ENCODE measurements at regions of chr16 and their contacts with region 1.

Region 1: GRCh38 chr16:495127-495748 is 32.3 kb upstream of the CAPN15 start:
- DNase-seq: peak; percentile 41 to 80
- H3K4me3 ChIP-seq: no peak overlapping the region
- H3K27ac ChIP-seq: no peak overlapping the region
- H3K4me1 ChIP-seq: peaks cover 6 to 9% (median 7%) of the 10 kb centered on the region in 4 experiments
- H3K27me3 ChIP-seq: no peaks in the 10 kb centered on the region
- CTCF ChIP-seq: peak; percentile 70 to 78 (median 74)
- EP300 ChIP-seq: no peak
- POLR2A ChIP-seq: no peak
- RAD21 ChIP-seq: peak; percentile 62 to 67

Region 2: DNA sequence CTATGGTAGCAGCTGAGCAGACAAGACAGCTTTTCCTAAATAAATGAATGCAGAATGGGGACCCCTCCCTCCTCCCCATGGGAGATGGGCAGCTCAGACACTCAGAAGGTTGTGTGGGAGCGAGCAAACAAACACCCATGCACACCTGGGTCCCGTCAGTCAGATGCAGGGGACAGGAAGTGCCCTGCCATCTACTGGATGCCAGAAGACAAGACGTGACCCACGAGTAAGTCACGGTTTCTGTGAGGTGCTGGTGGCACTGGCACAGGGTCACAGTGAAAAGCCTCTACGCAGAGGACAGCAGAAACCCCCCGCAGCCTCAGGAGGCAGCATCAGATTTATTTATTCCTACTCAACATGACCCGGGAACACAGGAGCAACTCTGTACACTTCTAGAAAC is 306.6 kb before region 1 on chr16:
- CTCF ChIA-PET with region 1: no interaction called
- POLR2A ChIA-PET with region 1: no interaction called
- DNase-seq: no peak
- H3K4me3 ChIP-seq: no peak overlapping the region
- H3K27ac ChIP-seq: no peak overlapping the region
- H3K4me1 ChIP-seq: no peaks in the 10 kb centered on the region
- H3K27me3 ChIP-seq: no peaks in the 10 kb centered on the region
- CTCF ChIP-seq: peak; percentile 21 to 59 (median 58); a peak in 3 of 4 replicates
- EP300 ChIP-seq: no peak
- POLR2A ChIP-seq: no peak
- RAD21 ChIP-seq: no peak; a peak in 1 of 4 replicates

Region 3: GRCh38 chr16:391885-392335 is 103.3 kb before region 1 on chr16:
- CTCF ChIA-PET with region 1: interaction called, 24 read pairs
- POLR2A ChIA-PET with region 1: no interaction called
- DNase-seq: peak; percentile 83 to 97
- H3K4me3 ChIP-seq: no peak overlapping the region
- H3K27ac ChIP-seq: no peak overlapping the region
- H3K4me1 ChIP-seq: peaks cover 0 to 7% (median 2%) of the 10 kb centered on the region in 4 experiments; a peak in 3 of 7 replicates
- H3K27me3 ChIP-seq: no peaks in the 10 kb centered on the region
- CTCF ChIP-seq: peak; percentile 94 to 100 (median 99)
- EP300 ChIP-seq: no peak
- POLR2A ChIP-seq: no peak
- RAD21 ChIP-seq: peak; percentile 99

Region 4: GRCh38 chr16:521381-522210 is 26.4 kb after region 1 on chr16:
- CTCF ChIA-PET with region 1: interaction called, 12 read pairs
- POLR2A ChIA-PET with region 1: interaction called, 3 read pairs
- DNase-seq: peak in 1 of 2 experiments; percentile 92
- H3K4me3 ChIP-seq: no peak overlapping the region
- H3K27ac ChIP-seq: no peak overlapping the region
- H3K4me1 ChIP-seq: peaks cover 0 to 12% (median 7%) of the 10 kb centered on the region in 4 experiments; a peak in 5 of 7 replicates
- H3K27me3 ChIP-seq: no peaks in the 10 kb centered on the region
- CTCF ChIP-seq: peak; percentile 75 to 83 (median 76)
- EP300 ChIP-seq: no peak
- POLR2A ChIP-seq: no peak
- RAD21 ChIP-seq: peak; percentile 74 to 80

Region 5: DNA sequence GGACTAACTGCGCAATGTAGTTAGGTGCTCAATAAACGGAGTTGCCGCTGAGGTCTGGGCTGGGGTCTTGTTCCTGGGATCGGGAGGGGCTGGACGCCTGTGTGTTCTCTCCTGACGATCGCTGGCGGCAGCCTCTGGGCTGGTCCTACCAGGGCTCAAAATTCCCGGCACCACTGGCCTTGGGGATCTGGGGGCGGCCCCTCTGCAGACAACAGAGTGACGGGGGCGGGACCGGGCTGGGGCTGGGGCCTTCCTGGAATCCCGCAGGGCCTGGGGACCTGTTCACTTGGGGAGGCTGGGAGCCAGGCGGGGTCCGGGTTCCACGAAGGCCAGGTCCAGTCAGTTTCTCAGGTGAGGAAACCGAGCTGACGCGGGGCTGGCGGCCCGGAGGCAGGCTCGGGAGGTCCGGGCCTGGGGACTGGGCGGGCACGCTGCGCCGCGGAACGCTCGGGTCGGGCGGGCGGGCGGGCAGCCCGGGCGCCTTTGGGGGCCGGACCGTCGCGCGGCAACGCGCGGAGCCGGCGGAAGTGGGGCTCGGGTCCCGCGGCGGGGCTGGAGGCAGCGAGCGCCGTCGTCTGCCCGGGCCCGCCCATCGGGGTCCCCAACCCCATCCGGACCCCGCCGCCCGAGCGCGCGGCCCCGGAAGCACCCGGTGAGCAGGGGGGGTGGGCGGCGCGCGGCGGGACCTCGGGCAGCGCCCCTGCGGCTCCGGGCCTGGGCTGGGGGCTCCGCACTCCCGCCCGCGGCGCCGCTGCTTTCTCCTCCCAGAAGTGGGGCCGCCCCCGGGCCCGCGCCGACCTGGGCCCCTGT is 74.4 kb after region 1 on chr16 and contains the start of gene PIGQ:
- CTCF ChIA-PET with region 1: no interaction called
- POLR2A ChIA-PET with region 1: no interaction called
- DNase-seq: peak in 1 of 2 experiments; percentile 85
- H3K4me3 ChIP-seq: peak within 1 kb of the TSS; percentile 71 to 95 (median 72)
- H3K27ac ChIP-seq: no peak within 1 kb of the TSS; the same call in 1 of the 2 replicates
- H3K4me1 ChIP-seq: peaks cover 0 to 27% (median 12%) of the 10 kb centered on the region in 4 experiments; a peak in 5 of 7 replicates
- H3K27me3 ChIP-seq: no peaks in the 10 kb centered on the region
- CTCF ChIP-seq: no peak
- EP300 ChIP-seq: no peak
- POLR2A ChIP-seq: peak in 1 of 2 experiments; percentile 33; a peak in 1 of 3 replicates
- RAD21 ChIP-seq: no peak
- total RNA-seq, gene PIGQ: 34.2 and 36.0 TPM in 2 replicates

Region 6: GRCh38 chr16:585351-585750 is 90.1 kb after region 1 on chr16:
- CTCF ChIA-PET with region 1: no interaction called
- POLR2A ChIA-PET with region 1: no interaction called
- DNase-seq: no peak
- H3K4me3 ChIP-seq: no peak overlapping the region
- H3K27ac ChIP-seq: no peak overlapping the region
- H3K4me1 ChIP-seq: peaks cover 0 to 26% (median 19%) of the 10 kb centered on the region in 4 experiments; a peak in 6 of 7 replicates
- H3K27me3 ChIP-seq: peaks cover 0 to 26% (median 19%) of the 10 kb centered on the region in 4 experiments; a peak in 5 of 7 replicates
- CTCF ChIP-seq: peak in 2 of 3 experiments; percentile 19 to 20; a peak in 3 of 4 replicates
- EP300 ChIP-seq: no peak
- POLR2A ChIP-seq: no peak
- RAD21 ChIP-seq: peak in 1 of 2 experiments; percentile 10; a peak in 1 of 4 replicates